OCI-LY7 (cell line): ENCODE measurements at regions of chr1 and their contacts with region 1.

Region 1: DNA sequence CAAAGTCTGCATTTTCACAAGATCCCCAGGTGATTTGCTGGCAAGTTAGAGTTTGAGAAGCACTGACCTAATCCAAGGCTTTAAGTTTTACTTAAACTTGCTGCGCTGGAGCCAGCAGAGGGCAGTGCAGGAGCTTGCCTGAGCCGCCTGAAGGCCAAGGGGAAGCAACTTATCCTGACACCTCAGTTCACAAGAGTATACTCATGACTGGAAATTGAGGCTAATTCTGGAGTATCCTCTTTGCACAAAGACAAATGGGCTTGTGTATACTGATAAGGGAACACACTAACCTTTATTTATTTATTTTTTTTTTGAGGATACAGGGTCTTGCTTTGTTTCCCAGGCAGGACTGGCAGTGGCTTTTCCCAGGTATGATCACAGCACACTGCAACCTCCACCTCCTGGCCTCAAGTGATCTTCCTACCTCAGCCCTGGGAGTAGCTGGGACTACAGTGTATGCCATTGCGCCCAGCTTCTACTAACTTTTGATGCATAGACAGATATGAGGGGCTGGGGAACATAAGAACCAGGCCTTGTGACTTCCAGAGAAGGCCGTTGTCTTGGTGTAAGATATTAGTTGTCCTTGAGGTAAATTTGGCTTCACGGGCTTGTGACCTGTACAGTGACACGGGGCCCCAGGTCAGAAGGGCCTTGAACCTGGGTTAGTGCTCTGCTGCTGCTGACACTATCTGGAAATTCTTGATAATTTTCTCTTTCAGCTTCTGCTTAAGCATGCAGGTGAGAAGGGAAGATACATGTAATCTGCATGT is 29.0 kb upstream of the SLAMF1 start:
- DNase-seq: peak; percentile 90
- H3K4me3 ChIP-seq: peak overlapping the region; percentile 51
- H3K27ac ChIP-seq: peak overlapping the region; percentile 93
- H3K4me1 ChIP-seq: peaks cover 57% of the 10 kb centered on the region
- CTCF ChIP-seq: peak; percentile 99

Region 2: DNA sequence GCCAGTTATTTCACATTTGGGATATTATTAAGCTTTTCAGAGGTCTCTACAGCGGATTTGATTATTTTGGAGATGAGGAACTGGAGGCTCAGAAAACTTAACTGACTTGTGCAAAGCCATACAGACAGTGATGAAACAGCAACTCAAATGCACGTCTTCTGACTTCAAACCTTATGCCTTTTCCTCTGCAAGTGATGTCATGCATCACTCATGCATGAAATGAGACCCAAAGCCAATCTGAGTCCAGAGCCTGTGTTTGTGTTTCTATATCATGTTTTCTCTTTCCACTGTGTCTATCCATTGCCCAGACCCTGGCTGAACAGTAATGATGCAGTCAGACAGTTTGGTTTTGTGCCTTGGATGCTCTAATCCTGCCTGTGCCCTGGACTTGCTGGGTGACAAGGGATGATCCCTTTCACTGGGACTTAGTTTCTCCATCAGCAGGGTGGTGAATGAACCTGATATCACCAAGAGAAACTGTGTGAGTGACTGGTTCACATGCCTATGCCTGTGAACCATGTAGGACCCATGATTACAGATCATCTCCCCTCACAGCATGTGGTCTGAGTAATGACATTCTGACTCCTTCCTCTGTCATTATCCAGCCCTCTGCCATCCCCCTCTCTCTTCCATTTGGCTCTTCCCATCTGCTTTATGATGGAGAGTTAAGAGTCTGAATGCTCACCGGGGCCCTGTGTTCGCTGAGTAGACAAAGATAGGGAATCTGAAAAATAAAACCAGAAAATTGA is 186.1 kb before region 1 on chr1:
- CTCF ChIA-PET with region 1: no interaction called
- POLR2A ChIA-PET with region 1: interaction called, 8 read pairs
- intact Hi-C with region 1: loop called (anchors 1 kb)
- DNase-seq: peak; percentile 52
- H3K4me3 ChIP-seq: peak overlapping the region; percentile 22
- H3K27ac ChIP-seq: peak overlapping the region; percentile 97
- H3K4me1 ChIP-seq: peaks cover 75% of the 10 kb centered on the region
- CTCF ChIP-seq: no peak

Region 3: GRCh38 chr1:160539990-160540858 is 135.6 kb before region 1 on chr1:
- CTCF ChIA-PET with region 1: no interaction called
- POLR2A ChIA-PET with region 1: interaction called, 3 read pairs
- intact Hi-C with region 1: loop called (anchors 5 kb)
- DNase-seq: peak; percentile 85
- H3K4me3 ChIP-seq: peak overlapping the region; percentile 35
- H3K27ac ChIP-seq: peak overlapping the region; percentile 85
- H3K4me1 ChIP-seq: peaks cover 58% of the 10 kb centered on the region
- CTCF ChIP-seq: no peak

Region 4: DNA sequence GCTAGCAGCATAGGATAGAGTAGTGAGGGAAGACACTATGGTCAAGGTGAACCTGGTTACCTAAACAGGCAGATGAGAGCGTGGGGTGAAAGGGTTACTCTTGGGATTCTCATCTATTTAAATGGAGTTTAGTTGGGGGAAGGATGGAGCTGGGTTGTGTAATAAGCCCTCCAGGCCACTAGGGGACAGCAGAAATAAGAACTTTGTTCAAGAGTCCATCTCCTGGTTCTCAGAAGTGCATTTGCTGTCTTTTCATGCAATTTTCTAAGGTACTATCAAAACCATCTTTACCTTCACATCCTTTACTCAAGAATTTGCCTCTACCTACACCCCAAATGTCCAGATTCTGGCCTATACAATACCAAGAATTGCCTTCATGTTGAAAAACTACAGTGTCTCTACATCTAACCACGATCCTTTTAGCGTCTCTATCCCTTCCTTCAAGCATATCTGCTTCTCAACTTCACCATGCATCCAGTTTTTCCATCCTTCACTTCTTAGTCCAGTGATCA is 57.0 kb before region 1 on chr1:
- CTCF ChIA-PET with region 1: interaction called, 12 read pairs
- POLR2A ChIA-PET with region 1: interaction called, 14 read pairs
- intact Hi-C with region 1: loop called (anchors 1 kb)
- DNase-seq: peak; percentile 59
- H3K4me3 ChIP-seq: no peak overlapping the region
- H3K27ac ChIP-seq: no peak overlapping the region
- H3K4me1 ChIP-seq: peaks cover 72% of the 10 kb centered on the region
- CTCF ChIP-seq: peak; percentile 90

Region 5: GRCh38 chr1:160653620-160654016 is 22.2 kb before region 1 on chr1:
- CTCF ChIA-PET with region 1: interaction called, 3 read pairs
- POLR2A ChIA-PET with region 1: interaction called, 10 read pairs
- intact Hi-C with region 1: loop called (anchors 1 kb)
- DNase-seq: peak; percentile 73
- H3K4me3 ChIP-seq: peak overlapping the region; percentile 61
- H3K27ac ChIP-seq: peak overlapping the region; percentile 81
- H3K4me1 ChIP-seq: peaks cover 86% of the 10 kb centered on the region
- CTCF ChIP-seq: no peak

Region 6: DNA sequence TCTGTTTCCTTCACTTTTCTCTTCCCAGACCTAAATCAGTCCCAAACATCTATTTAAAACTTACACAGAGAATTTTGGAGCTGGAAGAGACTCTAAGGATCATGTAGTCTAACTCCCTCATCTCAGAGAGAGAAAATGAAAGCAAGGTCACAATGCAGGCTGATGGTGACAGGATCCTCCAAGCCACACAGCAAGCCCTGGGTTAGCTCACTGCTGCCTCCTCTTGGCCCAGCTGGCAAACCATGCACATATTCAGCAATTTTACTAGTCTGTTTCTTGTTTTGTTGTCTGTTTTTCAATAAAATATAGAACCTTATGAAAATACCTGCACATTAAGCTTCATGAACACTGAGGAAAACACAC is 92.5 kb after region 1 on chr1:
- CTCF ChIA-PET with region 1: interaction called, 8 read pairs
- POLR2A ChIA-PET with region 1: interaction called, 6 read pairs
- intact Hi-C with region 1: loop called (anchors 1 kb)
- DNase-seq: peak; percentile 84
- H3K4me3 ChIP-seq: peak overlapping the region; percentile 62
- H3K27ac ChIP-seq: no peak overlapping the region
- H3K4me1 ChIP-seq: peaks cover 7% of the 10 kb centered on the region
- CTCF ChIP-seq: peak; percentile 90

Region 7: DNA sequence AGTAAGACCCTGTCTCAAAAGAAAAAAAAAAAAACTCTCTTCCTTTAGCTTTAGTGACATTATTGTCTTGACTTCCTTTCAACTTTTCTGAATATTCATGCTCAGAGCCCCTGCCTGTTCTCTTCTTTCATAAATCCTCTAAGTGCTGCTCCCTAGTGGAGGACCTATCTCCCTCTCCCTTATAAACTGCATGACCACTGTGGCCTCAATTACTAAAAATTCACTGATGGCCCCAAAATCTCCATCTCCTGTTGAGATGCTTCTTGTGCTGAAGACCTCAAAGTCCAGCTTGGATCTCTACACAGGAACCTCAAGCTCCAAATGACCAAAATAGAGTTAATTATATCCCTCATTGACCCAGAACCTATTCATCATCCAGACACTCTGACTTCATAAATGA is 201.4 kb after region 1 on chr1:
- CTCF ChIA-PET with region 1: no interaction called
- POLR2A ChIA-PET with region 1: no interaction called
- intact Hi-C with region 1: no loop called
- DNase-seq: peak; percentile 53
- H3K4me3 ChIP-seq: no peak overlapping the region
- H3K27ac ChIP-seq: no peak overlapping the region
- H3K4me1 ChIP-seq: no peaks in the 10 kb centered on the region
- CTCF ChIP-seq: peak; percentile 76